Esophagus muscularis mucosa (tissue), 4 donors: ENCODE measurements at regions of chr1 and their contacts with region 1.

Region 1: DNA sequence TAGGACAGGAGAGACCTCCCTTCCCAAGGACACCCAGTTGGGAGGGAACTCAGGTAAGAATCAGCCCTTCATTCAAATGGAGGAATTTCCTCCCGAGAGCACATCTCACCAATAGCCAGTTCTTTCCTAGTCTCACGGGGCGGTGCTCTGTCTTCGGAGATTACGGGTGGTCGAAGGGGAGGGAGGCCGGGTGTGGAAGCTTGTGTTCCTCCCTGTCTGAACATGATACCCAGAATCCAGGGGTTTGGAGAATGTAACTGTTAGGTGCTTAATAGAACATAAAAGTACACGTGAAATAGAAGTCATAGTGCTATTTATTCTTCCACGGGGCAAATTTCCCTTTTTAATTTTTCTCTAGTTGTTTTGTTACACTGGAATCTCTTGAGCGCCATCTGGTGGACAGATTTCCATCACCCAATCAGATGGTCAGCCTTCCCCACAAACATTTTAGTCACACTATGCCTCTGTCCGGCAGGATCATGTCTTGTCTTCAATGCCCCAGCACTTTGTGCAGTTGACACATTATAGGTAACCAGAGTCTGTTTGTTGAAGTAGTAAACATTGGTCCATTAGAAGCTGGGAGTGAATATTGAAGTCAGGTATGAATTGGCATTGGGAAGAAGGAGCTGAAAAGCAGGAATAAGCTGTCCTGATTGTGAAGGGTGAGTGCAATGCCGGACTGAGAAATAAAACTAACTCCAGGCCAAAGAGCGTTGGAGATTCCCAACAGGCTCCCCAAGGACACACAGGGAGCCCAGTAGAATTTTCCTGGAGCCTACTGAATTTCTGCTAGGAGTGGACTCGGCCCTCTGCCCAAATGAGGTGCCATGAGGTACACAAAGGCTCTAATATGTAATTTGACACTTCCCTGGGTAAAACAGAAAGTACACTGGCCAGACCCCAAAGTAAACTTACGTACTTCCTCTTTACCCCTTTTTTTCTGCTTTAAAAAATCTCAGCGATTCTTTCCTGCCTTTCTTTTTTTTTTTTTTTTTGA is 27.6 kb upstream of the ZNF697 start:
- DNase-seq: peak; percentile 97
- H3K4me3 ChIP-seq: peak overlapping the region; percentile 47 to 63 (median 49)
- H3K27ac ChIP-seq: peak overlapping the region in 3 of 4 donors; percentile 58 to 62 (median 59)
- H3K4me1 ChIP-seq: peaks cover 9 to 11% (median 10%) of the 10 kb centered on the region in 4 donors
- H3K27me3 ChIP-seq: no peaks in the 10 kb centered on the region
- CTCF ChIP-seq: peak; percentile 75 to 87 (median 86)
- EP300 ChIP-seq: no peak
- POLR2A ChIP-seq: no peak

Region 2: DNA sequence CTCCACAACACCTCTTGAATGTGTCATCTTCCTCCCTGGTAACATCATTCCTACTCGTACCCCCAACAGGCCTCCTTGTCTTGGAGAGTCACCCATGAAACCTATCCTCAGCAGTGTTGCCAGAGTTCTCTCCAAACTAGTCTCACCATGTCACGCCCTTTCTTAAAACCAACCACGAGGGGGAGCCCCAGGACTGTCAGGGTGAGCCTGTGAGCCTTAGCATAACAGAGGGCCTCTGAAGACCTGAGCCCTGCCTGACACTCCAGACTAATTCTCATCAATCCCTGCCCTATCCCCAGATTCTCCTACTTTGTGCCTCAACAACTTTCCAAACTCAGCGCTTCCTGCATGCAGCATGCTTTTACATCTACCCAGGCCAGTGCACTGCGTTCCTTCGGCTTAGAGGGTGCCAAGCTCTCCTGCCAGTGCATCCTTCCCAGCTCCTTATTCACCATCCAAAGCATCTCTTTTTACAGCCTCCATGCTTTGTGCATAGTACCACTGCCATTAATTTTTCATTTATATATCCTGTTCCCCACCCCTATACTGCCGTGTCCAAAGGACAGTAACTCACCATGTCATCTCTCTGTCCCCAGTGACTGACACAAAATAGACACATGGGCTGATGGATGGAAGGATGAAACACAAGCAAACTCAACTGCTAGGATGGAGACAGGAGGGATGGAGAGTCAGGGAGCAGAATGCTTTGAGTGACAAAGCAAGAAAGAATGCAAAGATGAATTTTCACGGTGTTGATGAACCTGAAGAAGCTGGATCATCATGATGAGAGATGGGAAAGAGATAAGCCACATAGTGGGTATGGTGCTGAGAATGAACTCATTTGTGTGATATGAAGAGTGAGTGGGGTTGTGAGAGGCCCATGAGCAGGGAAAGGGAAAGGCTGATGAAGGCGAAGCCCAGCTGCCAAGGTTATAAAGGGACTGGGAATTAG is 61.6 kb before region 1 on chr1:
- intact Hi-C with region 1: loop called (anchors 2 kb)
- DNase-seq: peak; percentile 96
- H3K4me3 ChIP-seq: no peak overlapping the region
- H3K27ac ChIP-seq: no peak overlapping the region
- H3K4me1 ChIP-seq: peaks cover 10 to 23% (median 11%) of the 10 kb centered on the region in 4 donors
- H3K27me3 ChIP-seq: no peaks in the 10 kb centered on the region
- CTCF ChIP-seq: peak; percentile 81 to 92 (median 82)
- EP300 ChIP-seq: no peak
- POLR2A ChIP-seq: no peak

Region 3: GRCh38 chr1:119784191-119784782 is 108.6 kb after region 1 on chr1:
- intact Hi-C with region 1: no loop called
- DNase-seq: peak; percentile 88
- H3K4me3 ChIP-seq: no peak overlapping the region
- H3K27ac ChIP-seq: peak overlapping the region in 1 of 4 donors; percentile 13
- H3K4me1 ChIP-seq: peaks cover 0 to 41% (median 15%) of the 10 kb centered on the region in 4 donors
- H3K27me3 ChIP-seq: no peaks in the 10 kb centered on the region
- CTCF ChIP-seq: no peak
- EP300 ChIP-seq: no peak
- POLR2A ChIP-seq: no peak